Activated naive CD4-positive, alpha-beta T cell treated with anti-CD3 and anti-CD28 coated beads, Interleukin-2, amount 10 ng/mL, durations not matched to agents 7 days and 5 days (primary cell): ENCODE measurements at regions of chr5 and their contacts with region 1.

Region 1: GRCh38 chr5:32489791-32490582 is 45.4 kb upstream of the ZFR start:
- DNase-seq: peak; percentile 79
- H3K4me3 Mint-ChIP-seq: no peak overlapping the region
- H3K27ac Mint-ChIP-seq: no peak overlapping the region
- H3K4me1 Mint-ChIP-seq: no peaks in the 10 kb centered on the region
- H3K27me3 Mint-ChIP-seq: no peaks in the 10 kb centered on the region

Region 2: DNA sequence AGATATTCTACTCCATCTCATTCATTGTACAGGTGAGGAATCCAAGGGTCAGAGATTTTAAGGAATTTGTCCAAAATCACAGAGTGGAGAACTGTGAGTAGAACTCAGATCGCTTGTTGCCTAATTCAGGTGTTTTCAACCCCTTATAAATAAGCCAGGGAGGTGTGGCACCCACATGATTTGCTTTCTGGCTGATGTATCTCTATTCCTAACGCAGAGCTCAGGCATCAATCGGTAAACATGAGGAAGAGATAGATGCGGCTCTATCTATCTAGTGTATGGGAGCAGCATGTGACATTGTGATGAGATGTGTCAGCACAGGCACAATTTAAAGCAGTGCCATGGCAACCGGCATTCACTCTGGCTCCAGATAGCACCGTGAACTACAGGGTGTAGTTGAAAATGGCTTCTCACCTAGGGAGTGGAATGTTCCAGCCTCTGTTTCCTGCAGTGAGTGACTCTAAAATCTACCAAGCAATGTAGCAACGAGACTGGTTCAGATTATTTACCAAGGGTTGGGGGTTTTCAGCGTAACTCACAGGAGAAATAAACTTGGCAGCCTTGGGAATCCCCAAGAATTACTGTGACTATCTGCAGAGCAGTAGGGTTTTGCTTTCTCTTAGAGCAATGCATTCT is 42.0 kb after region 1 on chr5:
- CTCF ChIA-PET with region 1: interaction called, 18 read pairs
- DNase-seq: peak; percentile 60
- H3K4me3 Mint-ChIP-seq: peak overlapping the region; percentile 72
- H3K27ac Mint-ChIP-seq: peak overlapping the region; percentile 90
- H3K4me1 Mint-ChIP-seq: peaks cover 54% of the 10 kb centered on the region
- H3K27me3 Mint-ChIP-seq: no peaks in the 10 kb centered on the region

Region 3: DNA sequence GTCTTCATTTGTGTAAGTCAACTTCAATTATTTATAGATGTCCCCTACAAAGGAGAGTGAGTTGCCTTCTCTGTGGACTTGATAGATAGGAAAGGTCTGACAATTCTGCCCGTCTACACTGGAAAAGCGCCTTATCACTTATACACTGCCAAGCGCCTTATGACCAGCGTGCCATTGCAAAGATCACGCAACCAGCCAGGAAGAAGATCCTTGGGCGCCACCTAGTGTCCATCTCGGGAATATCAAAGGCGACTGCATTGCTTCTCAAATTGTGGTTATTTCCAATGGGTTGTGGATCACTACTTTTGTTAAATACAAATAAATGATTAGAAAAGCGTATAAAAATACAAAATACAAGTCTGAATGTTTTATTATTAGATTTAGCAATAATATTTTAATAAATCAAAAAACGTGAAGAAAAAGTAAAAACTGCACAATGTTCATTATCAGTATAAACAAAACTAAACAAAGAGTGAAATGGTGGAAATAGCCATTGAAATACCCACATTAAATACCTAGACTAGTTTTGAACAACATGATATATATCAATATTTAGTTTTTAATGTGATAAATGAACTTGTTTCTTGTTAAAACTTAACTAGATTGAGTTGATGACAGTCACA is 123.2 kb after region 1 on chr5:
- CTCF ChIA-PET with region 1: interaction called, 56 read pairs
- DNase-seq: peak; percentile 88
- H3K4me3 Mint-ChIP-seq: no peak overlapping the region
- H3K27ac Mint-ChIP-seq: no peak overlapping the region
- H3K4me1 Mint-ChIP-seq: peaks cover 2% of the 10 kb centered on the region
- H3K27me3 Mint-ChIP-seq: no peaks in the 10 kb centered on the region